ENCODE measurements at regions of chr3 and their contacts with region 1.

Region 1: DNA sequence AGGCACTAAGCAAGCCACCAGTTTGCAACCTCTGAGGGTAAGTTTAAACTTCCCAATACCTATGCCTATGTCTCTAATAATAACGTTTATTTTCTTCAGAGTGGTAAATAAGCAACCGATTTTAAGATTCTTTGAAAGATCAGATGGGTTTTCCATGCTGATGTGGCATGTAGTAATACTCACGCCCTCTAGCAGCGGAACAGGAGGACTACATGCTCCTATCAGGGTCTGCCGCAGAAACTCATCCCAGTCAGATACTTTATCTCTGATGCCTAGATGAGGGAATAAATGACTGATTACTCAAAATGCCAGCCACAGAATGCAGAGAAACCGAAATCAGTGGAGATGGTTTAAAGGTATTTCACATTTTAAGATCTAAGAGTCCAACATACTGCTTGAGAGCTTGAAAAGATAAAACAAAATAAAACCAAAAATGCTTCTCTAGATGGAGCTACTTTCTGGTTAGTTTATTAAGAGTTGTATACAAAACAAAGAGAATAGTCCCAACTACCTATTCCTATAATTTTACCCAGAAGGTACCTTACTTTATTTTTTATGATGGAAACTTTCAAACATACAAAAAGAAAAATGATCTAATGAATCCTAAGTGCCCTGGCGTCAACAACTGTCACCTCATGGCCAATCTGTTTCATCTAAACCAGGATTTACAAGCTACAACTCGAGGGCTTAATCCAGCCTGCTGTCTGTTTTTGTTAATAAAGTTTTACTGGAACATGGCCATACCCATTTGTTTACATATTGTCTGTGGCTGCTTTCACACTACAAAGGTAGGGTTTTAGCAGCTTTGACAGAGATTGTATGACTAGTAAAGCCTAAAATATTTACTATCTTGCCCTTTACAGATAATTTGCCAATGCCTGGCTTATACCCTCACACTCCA is 37.5 kb upstream of the STIMATE start:
- DNase-seq: peak in 1 of 2 donors; percentile 76
- H3K4me3 ChIP-seq: no peak overlapping the region
- H3K27ac ChIP-seq: no peak overlapping the region
- H3K4me1 ChIP-seq: no peaks in the 10 kb centered on the region
- H3K27me3 ChIP-seq: no peaks in the 10 kb centered on the region
- CTCF ChIP-seq: peak; percentile 55 to 77 (median 75)

Region 2: GRCh38 chr3:52742418-52743041 is 192.3 kb before region 1 on chr3:
- intact Hi-C with region 1: loop called (anchors 2 kb)
- DNase-seq: no peak
- H3K4me3 ChIP-seq: no peak overlapping the region
- H3K27ac ChIP-seq: no peak overlapping the region
- H3K4me1 ChIP-seq: no peaks in the 10 kb centered on the region
- H3K27me3 ChIP-seq: no peaks in the 10 kb centered on the region
- CTCF ChIP-seq: peak; percentile 47 to 64 (median 51)

Region 3: DNA sequence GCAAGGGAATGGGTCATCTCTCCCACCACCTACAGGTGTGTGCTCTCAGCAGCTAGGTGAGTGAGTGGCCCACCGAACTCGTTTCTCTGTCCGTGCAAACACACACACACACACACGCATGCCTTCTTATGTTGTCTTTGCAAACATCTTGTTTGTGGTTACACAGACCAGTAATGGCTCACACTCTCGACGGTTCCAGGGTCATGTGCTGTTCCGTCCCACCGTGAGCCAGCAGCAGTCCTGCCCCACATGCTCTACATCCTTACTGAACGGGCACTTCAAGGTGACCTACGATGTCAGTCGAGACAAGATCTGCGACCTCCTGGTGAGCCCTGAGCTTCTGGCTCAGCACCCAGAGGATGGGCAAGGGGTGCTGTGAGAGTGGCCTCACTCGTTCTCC is 153.1 kb before region 1 on chr3:
- intact Hi-C with region 1: loop called (anchors 5 kb)
- DNase-seq: no peak
- H3K4me3 ChIP-seq: no peak overlapping the region
- H3K27ac ChIP-seq: no peak overlapping the region
- H3K4me1 ChIP-seq: no peaks in the 10 kb centered on the region
- H3K27me3 ChIP-seq: no peaks in the 10 kb centered on the region
- CTCF ChIP-seq: no peak

Region 4: GRCh38 chr3:52851348-52851747 is 83.5 kb before region 1 on chr3:
- intact Hi-C with region 1: loop called (anchors 2 kb)
- DNase-seq: no peak
- H3K4me3 ChIP-seq: no peak overlapping the region
- H3K27ac ChIP-seq: no peak overlapping the region
- H3K4me1 ChIP-seq: no peaks in the 10 kb centered on the region
- H3K27me3 ChIP-seq: no peaks in the 10 kb centered on the region
- CTCF ChIP-seq: peak; percentile 15 to 51 (median 44)